ENCODE measurements at regions of chr4 and their contacts with region 1.

Region 1: GRCh38 chr4:101334963-101335572 is 12.3 kb downstream of the PPP3CA start:
- DNase-seq: no peak
- H3K4me3 ChIP-seq: no peak overlapping the region
- H3K27ac ChIP-seq: no peak overlapping the region
- H3K4me1 ChIP-seq: peaks cover 70% of the 10 kb centered on the region
- H3K27me3 ChIP-seq: no peaks in the 10 kb centered on the region
- CTCF ChIP-seq: no peak

Region 2: GRCh38 chr4:101175896-101176676 is 159.0 kb before region 1 on chr4:
- CTCF ChIA-PET with region 1: no interaction called
- POLR2A ChIA-PET with region 1: no interaction called
- intact Hi-C with region 1: loop called (anchors 5 kb)
- DNase-seq: no peak
- H3K4me3 ChIP-seq: no peak overlapping the region
- H3K27ac ChIP-seq: no peak overlapping the region
- H3K4me1 ChIP-seq: peaks cover 36% of the 10 kb centered on the region
- H3K27me3 ChIP-seq: no peaks in the 10 kb centered on the region
- CTCF ChIP-seq: no peak

Region 3: GRCh38 chr4:101187841-101188240 is 147.2 kb before region 1 on chr4:
- CTCF ChIA-PET with region 1: interaction called, 3 read pairs
- POLR2A ChIA-PET with region 1: no interaction called
- intact Hi-C with region 1: loop called (anchors 5 kb)
- DNase-seq: no peak
- H3K4me3 ChIP-seq: no peak overlapping the region
- H3K27ac ChIP-seq: no peak overlapping the region
- H3K4me1 ChIP-seq: peaks cover 49% of the 10 kb centered on the region
- H3K27me3 ChIP-seq: no peaks in the 10 kb centered on the region
- CTCF ChIP-seq: peak; percentile 56

Region 4: GRCh38 chr4:101515099-101515498 is 180.0 kb after region 1 on chr4:
- CTCF ChIA-PET with region 1: no interaction called
- POLR2A ChIA-PET with region 1: no interaction called
- intact Hi-C with region 1: no loop called
- DNase-seq: no peak
- H3K4me3 ChIP-seq: no peak overlapping the region
- H3K27ac ChIP-seq: no peak overlapping the region
- H3K4me1 ChIP-seq: no peaks in the 10 kb centered on the region
- H3K27me3 ChIP-seq: no peaks in the 10 kb centered on the region
- CTCF ChIP-seq: no peak

Region 5: DNA sequence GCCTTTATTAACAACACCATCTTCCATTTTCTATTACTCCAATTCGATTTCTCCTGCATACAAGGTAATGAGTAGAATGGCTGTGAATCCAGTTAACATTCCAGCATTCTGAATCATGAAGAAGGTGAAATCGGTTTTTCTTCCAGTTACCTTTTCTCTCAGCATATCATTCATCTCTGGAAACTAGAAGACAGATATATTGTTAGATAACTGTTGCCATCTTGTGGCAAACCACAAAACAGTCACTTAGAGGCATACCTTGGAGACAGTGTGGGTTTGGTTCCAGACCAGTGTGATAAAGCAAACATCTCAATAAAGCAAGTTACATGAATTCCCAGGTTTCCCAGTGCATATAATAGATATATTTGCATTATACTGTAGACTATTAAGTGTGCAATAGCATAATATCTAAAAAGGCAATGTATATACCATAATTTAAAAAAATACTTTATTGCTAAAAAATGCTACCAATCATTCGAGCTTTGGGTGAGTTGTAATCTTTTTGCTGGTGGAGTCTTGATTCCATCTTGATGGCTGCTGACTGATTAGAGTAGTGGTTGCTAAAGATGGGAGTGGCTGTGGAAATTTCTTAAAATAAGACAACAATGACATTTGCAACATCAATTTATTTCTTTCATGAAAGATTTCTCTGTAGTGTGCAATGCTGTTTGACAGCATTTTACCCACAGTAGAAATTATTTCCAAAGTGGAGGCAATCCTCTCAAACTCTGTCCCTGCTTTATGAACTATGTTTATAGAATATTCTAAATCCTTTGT is 928.1 kb after region 1 on chr4:
- CTCF ChIA-PET with region 1: no interaction called
- POLR2A ChIA-PET with region 1: no interaction called
- intact Hi-C with region 1: loop called (anchors 10 kb)
- DNase-seq: peak; percentile 56
- H3K4me3 ChIP-seq: no peak overlapping the region
- H3K27ac ChIP-seq: no peak overlapping the region
- H3K4me1 ChIP-seq: no peaks in the 10 kb centered on the region
- H3K27me3 ChIP-seq: no peaks in the 10 kb centered on the region
- CTCF ChIP-seq: peak; percentile 64